ENCODE measurements at regions of chr3 and their contacts with region 1.

Region 1: DNA sequence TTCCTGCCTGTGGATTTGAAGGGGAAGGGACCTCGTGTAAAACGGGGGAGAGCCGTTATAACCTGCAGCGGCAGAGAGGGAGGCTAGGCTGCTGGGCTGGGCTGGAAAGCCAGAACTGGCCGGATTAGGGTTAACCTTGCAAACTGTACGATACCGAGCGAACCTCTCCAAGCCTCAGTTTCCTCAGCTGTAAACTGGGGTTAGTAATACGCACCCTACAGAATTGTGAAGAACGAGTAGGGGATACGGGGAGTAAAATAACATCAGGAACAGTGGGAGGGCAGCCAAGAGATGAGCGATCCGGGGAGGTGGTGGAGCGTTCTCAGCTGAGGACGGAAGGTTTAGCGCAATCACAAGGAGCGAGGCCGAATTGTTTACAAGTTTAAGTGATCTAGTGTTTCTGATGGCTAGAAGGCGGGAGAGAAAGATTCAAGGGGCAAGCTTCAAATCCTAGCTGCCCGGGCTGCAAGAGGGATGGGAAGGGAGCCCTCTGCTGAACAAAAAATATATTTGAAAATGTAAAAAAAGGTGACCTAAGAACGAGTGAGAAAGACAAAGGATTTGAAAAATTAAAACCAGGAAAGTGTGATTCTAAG is 768 bp upstream of the SEMA5B start:
- DNase-seq: peak; percentile 22
- H3K4me3 Mint-ChIP-seq: peak overlapping the region; percentile 33
- H3K27ac Mint-ChIP-seq: no peak overlapping the region
- H3K4me1 Mint-ChIP-seq: peaks cover 16% of the 10 kb centered on the region
- H3K27me3 Mint-ChIP-seq: peaks cover 36% of the 10 kb centered on the region

Region 2: DNA sequence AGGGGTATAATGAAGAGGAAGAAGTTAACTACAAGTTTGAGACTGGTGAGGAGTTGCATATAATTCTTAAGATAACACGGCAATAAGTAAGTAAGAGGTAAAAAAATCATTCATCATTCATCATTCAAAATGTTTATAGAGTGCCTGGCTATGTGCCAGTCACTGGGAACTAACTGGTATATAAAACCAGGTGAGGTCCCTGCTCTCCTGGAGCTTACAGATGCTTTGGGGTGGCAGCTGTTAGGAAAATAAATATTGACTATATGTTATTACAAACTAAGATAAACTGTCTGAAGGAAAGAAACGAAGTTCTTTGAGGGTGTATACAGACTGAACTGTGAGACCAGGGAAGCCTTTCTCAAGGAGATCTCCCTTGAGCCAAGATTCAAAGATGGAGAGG is 842.0 kb before region 1 on chr3:
- CTCF ChIA-PET with region 1: no interaction called
- POLR2A ChIA-PET with region 1: no interaction called
- DNase-seq: no peak
- H3K4me3 Mint-ChIP-seq: no peak overlapping the region
- H3K27ac Mint-ChIP-seq: no peak overlapping the region
- H3K4me1 Mint-ChIP-seq: peaks cover 10% of the 10 kb centered on the region
- H3K27me3 Mint-ChIP-seq: peaks cover 83% of the 10 kb centered on the region

Region 3: GRCh38 chr3:122754929-122755328 is 273.4 kb before region 1 on chr3:
- CTCF ChIA-PET with region 1: interaction called, 15 read pairs
- POLR2A ChIA-PET with region 1: no interaction called
- DNase-seq: no peak
- H3K4me3 Mint-ChIP-seq: no peak overlapping the region
- H3K27ac Mint-ChIP-seq: no peak overlapping the region
- H3K4me1 Mint-ChIP-seq: peaks cover 11% of the 10 kb centered on the region
- H3K27me3 Mint-ChIP-seq: no peaks in the 10 kb centered on the region

Region 4: GRCh38 chr3:122942937-122943827 is 85.1 kb before region 1 on chr3:
- CTCF ChIA-PET with region 1: interaction called, 23 read pairs
- POLR2A ChIA-PET with region 1: no interaction called
- DNase-seq: peak; percentile 44
- H3K4me3 Mint-ChIP-seq: no peak overlapping the region
- H3K27ac Mint-ChIP-seq: no peak overlapping the region
- H3K4me1 Mint-ChIP-seq: peaks cover 9% of the 10 kb centered on the region
- H3K27me3 Mint-ChIP-seq: peaks cover 19% of the 10 kb centered on the region

Measured in activated CD4-positive, alpha-beta memory T cell treated with anti-CD3 and anti-CD28 coated beads, Interleukin-2, amount 10 ng/mL, durations not matched to agents 7 days and 5 days (primary cell).